ENCODE measurements at regions of chr2 and their contacts with region 1.

Region 1: GRCh38 chr2:7427293-7428060 is 510.3 kb downstream of the RNF144A start:
- DNase-seq: no peak
- H3K4me3 ChIP-seq: no peak overlapping the region
- H3K27ac ChIP-seq: no peak overlapping the region
- H3K4me1 ChIP-seq: peaks cover 0 to 42% (median 17%) of the 10 kb centered on the region in 4 donors
- H3K27me3 ChIP-seq: no peaks in the 10 kb centered on the region
- CTCF ChIP-seq: peak; percentile 49 to 71 (median 62)
- EP300 ChIP-seq: no peak
- POLR2A ChIP-seq: no peak

Region 2: DNA sequence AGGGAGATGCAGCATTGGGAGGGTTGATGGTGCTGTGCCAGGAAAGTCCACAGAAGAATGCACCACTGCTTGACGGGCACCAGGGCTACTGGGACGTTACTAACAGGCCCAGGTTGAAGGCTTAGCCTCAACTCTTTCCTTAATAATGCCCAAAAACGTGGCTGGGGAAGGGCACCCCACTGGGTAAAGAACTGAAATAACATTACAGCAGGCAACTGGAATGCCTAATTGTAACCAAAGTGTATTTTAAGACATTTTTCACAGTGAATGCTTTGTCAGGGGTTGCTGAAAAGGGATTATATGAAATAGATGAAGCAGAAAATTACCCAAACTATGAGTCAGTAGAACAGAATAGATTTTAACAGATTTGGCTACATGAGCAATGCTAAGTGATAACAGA is 753.1 kb before region 1 on chr2:
- intact Hi-C with region 1: no loop called
- DNase-seq: no peak
- H3K4me3 ChIP-seq: no peak overlapping the region
- H3K27ac ChIP-seq: no peak overlapping the region
- H3K4me1 ChIP-seq: no peaks in the 10 kb centered on the region
- H3K27me3 ChIP-seq: no peaks in the 10 kb centered on the region
- CTCF ChIP-seq: no peak
- EP300 ChIP-seq: no peak
- POLR2A ChIP-seq: no peak

Region 3: DNA sequence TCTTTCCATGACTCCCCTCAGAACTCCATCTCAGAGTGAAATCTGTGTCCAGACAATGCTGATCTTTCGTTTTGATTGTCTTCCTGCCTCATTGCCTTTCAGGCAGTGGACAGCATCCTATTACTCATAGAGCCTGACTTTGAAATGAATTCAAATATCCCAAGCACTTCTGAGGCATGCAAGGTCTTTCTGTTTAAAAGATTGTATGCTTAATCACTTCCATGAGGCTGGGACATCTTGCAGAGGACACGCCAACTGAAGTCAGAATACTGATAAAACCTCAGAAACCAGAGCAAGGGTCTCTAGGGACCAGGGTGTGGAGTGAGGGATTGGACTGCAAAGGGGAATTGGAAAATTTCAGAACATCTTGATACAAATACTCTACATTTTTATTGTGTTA is 417.9 kb after region 1 on chr2:
- intact Hi-C with region 1: loop called (anchors 10 kb)
- DNase-seq: no peak
- H3K4me3 ChIP-seq: no peak overlapping the region
- H3K27ac ChIP-seq: peak overlapping the region in 2 of 4 donors; percentile 40 to 64
- H3K4me1 ChIP-seq: peaks cover 0 to 38% (median 33%) of the 10 kb centered on the region in 4 donors
- H3K27me3 ChIP-seq: no peaks in the 10 kb centered on the region
- CTCF ChIP-seq: no peak
- EP300 ChIP-seq: no peak
- POLR2A ChIP-seq: no peak

Region 4: GRCh38 chr2:8004250-8004681 is 576.8 kb after region 1 on chr2:
- intact Hi-C with region 1: loop called (anchors 10 kb)
- DNase-seq: peak; percentile 84
- H3K4me3 ChIP-seq: peak overlapping the region in 2 of 4 donors; percentile 8 to 22
- H3K27ac ChIP-seq: peak overlapping the region; percentile 58 to 84 (median 77)
- H3K4me1 ChIP-seq: peaks cover 0 to 18% (median 14%) of the 10 kb centered on the region in 4 donors
- H3K27me3 ChIP-seq: no peaks in the 10 kb centered on the region
- CTCF ChIP-seq: no peak
- EP300 ChIP-seq: peak in 3 of 4 donors; percentile 18 to 83 (median 62)
- POLR2A ChIP-seq: no peak

Region 5: GRCh38 chr2:8162552-8162951 is 735.1 kb after region 1 on chr2:
- intact Hi-C with region 1: loop called (anchors 5 kb)
- DNase-seq: peak; percentile 94
- H3K4me3 ChIP-seq: no peak overlapping the region
- H3K27ac ChIP-seq: peak overlapping the region; percentile 21 to 85 (median 82)
- H3K4me1 ChIP-seq: peaks cover 0 to 36% (median 18%) of the 10 kb centered on the region in 4 donors
- H3K27me3 ChIP-seq: no peaks in the 10 kb centered on the region
- CTCF ChIP-seq: no peak
- EP300 ChIP-seq: peak; percentile 78 to 88 (median 82)
- POLR2A ChIP-seq: no peak

Region 6: DNA sequence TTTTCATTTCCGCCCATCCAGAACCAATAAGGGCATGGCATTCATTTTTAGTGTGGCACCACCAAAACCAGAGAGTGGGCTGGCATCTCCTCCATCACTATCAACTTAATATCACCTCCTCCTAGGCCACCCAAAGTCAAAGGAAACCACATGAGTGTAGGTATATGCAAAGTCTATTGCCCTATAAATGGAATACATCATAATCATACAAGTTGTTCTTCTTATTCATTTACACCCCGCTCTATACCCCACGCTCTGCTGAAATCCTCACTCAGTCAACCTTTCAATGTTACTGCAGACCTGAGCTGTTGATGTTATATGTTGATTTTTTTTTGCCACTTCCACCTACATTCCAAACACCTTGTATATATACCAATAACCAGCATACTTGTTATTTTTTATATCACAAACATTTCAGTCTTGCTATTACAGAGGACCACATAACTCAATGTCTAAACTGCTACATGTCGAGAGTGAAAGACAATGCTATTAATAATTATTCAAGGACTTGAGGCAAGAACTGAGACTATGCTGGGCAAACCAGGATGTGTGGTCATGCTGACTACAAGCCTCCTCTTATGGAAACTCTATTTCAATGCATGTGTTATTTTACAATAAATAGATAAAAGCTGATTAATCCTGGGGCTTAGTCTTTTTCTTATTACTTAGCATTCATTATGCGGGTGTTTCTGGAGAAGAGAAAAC is 787.8 kb after region 1 on chr2:
- intact Hi-C with region 1: loop called (anchors 10 kb)
- DNase-seq: no peak
- H3K4me3 ChIP-seq: no peak overlapping the region
- H3K27ac ChIP-seq: no peak overlapping the region
- H3K4me1 ChIP-seq: peaks cover 0 to 30% (median 3%) of the 10 kb centered on the region in 4 donors
- H3K27me3 ChIP-seq: no peaks in the 10 kb centered on the region
- CTCF ChIP-seq: no peak
- EP300 ChIP-seq: no peak
- POLR2A ChIP-seq: no peak

Region 7: GRCh38 chr2:8303322-8303832 is 875.9 kb after region 1 on chr2:
- intact Hi-C with region 1: loop called (anchors 10 kb)
- DNase-seq: peak; percentile 85
- H3K4me3 ChIP-seq: no peak overlapping the region
- H3K27ac ChIP-seq: peak overlapping the region in 1 of 4 donors; percentile 72
- H3K4me1 ChIP-seq: peaks cover 0 to 24% (median 10%) of the 10 kb centered on the region in 4 donors
- H3K27me3 ChIP-seq: no peaks in the 10 kb centered on the region
- CTCF ChIP-seq: no peak
- EP300 ChIP-seq: peak in 1 of 4 donors; percentile 23
- POLR2A ChIP-seq: no peak

Region 8: DNA sequence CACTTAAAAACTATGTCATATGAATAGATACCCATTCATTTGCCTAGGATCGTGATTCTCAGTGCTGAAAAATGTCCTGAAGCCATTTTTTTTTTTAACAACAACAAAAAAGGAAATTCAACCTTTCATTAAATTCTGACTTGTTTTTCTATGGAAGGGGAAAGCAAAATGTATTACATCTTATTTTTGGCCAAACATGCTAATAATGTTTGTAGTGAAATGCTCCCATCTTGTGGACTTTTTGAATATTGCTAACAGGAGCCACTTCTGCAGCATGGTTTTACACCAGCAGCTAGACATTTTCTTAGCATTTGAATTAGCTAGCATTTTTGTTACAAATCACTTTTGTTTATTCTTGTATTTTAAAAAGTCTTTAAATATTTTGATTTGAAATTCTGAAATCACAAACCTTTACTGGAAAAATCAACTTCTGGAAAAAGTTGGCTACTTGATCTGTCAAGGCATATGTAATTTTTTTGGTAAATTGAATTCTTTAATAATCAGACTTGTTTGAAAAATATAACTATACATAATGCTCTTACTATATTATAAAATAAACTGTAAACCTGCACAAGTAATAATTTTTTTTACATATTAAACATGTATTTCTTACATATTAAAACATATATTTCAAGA is 1334.2 kb after region 1 on chr2:
- intact Hi-C with region 1: loop called (anchors 5 kb)
- DNase-seq: no peak
- H3K4me3 ChIP-seq: no peak overlapping the region
- H3K27ac ChIP-seq: no peak overlapping the region
- H3K4me1 ChIP-seq: peaks cover 0 to 44% (median 26%) of the 10 kb centered on the region in 4 donors
- H3K27me3 ChIP-seq: no peaks in the 10 kb centered on the region
- CTCF ChIP-seq: peak; percentile 34 to 58 (median 50)
- EP300 ChIP-seq: no peak
- POLR2A ChIP-seq: no peak

Measured in sigmoid colon (tissue), 7 donors.